ENCODE measurements at regions of chr5 and their contacts with region 1.

Region 1: GRCh38 chr5:149317281-149318048 is 27.8 kb upstream of the GRPEL2 start:
- DNase-seq: peak in 7 of 9 experiments; percentile 14 to 71 (median 38)
- ATAC-seq: peak; percentile 69
- H3K4me3 ChIP-seq: no peak overlapping the region
- H3K4me3 Mint-ChIP-seq: no peak overlapping the region
- H3K27ac ChIP-seq: no peak overlapping the region
- H3K27ac Mint-ChIP-seq: no peak overlapping the region
- H3K4me1 ChIP-seq: no peaks in the 10 kb centered on the region
- H3K4me1 Mint-ChIP-seq: peaks cover 3% of the 10 kb centered on the region
- H3K27me3 ChIP-seq: no peaks in the 10 kb centered on the region
- H3K27me3 Mint-ChIP-seq: no peaks in the 10 kb centered on the region
- CTCF ChIP-seq: peak; percentile 90

Region 2: DNA sequence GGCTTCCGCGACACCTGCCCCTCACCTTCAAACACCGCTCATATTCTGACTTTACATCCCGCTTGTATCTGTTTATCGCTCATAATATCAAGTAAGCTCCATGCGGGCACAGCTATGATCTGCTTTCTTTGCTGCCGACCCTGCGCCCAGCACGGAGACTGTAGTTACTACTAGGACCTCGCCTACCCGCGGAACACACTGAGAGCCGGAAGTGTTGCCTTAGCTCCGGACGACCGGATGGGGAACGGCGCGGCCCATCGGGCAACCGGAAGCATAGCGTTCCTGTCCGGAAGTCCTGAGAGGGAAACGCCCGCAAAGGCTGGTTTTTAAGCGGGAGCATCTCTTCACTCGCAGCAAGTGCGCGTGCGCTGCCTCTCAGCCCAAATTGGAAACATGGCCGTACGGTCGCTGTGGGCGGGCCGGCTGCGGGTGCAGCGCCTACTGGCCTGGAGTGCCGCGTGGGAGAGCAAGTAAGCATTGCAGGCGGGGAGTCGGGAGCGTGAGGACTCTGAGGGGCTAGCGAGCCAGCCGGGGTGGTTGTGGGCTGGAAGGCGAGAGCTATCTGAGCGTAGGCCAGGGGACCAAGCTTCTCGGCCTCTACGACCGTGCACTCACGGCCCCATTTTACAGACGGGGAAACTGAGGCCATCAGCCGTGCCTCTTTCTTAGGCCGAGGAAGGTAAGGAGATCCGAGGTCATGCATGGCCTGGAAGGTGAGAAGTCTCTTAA is 27.8 kb after region 1 on chr5 and contains the start of gene GRPEL2:
- CTCF ChIA-PET with region 1: interaction called, 15 read pairs
- POLR2A ChIA-PET with region 1: interaction called, 3 read pairs
- intact Hi-C with region 1: no loop called
- DNase-seq: peak; percentile 65 to 93 (median 84)
- ATAC-seq: peak; percentile 65
- H3K4me3 ChIP-seq: peak within 1 kb of the TSS; percentile 94 to 95
- H3K4me3 Mint-ChIP-seq: peak within 1 kb of the TSS; percentile 92
- H3K27ac ChIP-seq: peak within 1 kb of the TSS; percentile 63 to 88
- H3K27ac Mint-ChIP-seq: peak within 1 kb of the TSS; percentile 90
- H3K4me1 ChIP-seq: peaks cover 53% of the 10 kb centered on the region
- H3K4me1 Mint-ChIP-seq: peaks cover 60% of the 10 kb centered on the region
- H3K27me3 ChIP-seq: no peaks in the 10 kb centered on the region
- H3K27me3 Mint-ChIP-seq: no peaks in the 10 kb centered on the region
- CTCF ChIP-seq: no peak
- total RNA-seq, gene GRPEL2: 9.1 to 9.7 TPM

Region 3: GRCh38 chr5:149357370-149358293 is 40.2 kb after region 1 on chr5 and contains the start of gene PCYOX1L:
- CTCF ChIA-PET with region 1: interaction called, 541 read pairs
- POLR2A ChIA-PET with region 1: interaction called, 5 read pairs
- intact Hi-C with region 1: no loop called
- DNase-seq: peak; percentile 89 to 99 (median 95)
- ATAC-seq: peak; percentile 96
- H3K4me3 ChIP-seq: peak within 1 kb of the TSS; percentile 83 to 88
- H3K4me3 Mint-ChIP-seq: peak within 1 kb of the TSS; percentile 93
- H3K27ac ChIP-seq: peak within 1 kb of the TSS; percentile 63 to 74
- H3K27ac Mint-ChIP-seq: peak within 1 kb of the TSS; percentile 92
- H3K4me1 ChIP-seq: peaks cover 37% of the 10 kb centered on the region
- H3K4me1 Mint-ChIP-seq: peaks cover 67% of the 10 kb centered on the region
- H3K27me3 ChIP-seq: no peaks in the 10 kb centered on the region
- H3K27me3 Mint-ChIP-seq: no peaks in the 10 kb centered on the region
- CTCF ChIP-seq: no peak
- total RNA-seq, gene PCYOX1L: 18.9 to 21.9 TPM

Region 4: GRCh38 chr5:149381987-149382340 is 64.5 kb after region 1 on chr5:
- CTCF ChIA-PET with region 1: interaction called, 541 read pairs
- POLR2A ChIA-PET with region 1: no interaction called
- intact Hi-C with region 1: no loop called
- DNase-seq: peak; percentile 45 to 82 (median 71)
- ATAC-seq: peak; percentile 61
- H3K4me3 ChIP-seq: no peak overlapping the region
- H3K4me3 Mint-ChIP-seq: no peak overlapping the region
- H3K27ac ChIP-seq: no peak overlapping the region
- H3K27ac Mint-ChIP-seq: no peak overlapping the region
- H3K4me1 ChIP-seq: peaks cover 3% of the 10 kb centered on the region
- H3K4me1 Mint-ChIP-seq: peaks cover 4% of the 10 kb centered on the region
- H3K27me3 ChIP-seq: peaks cover 0 to 2% of the 10 kb centered on the region in 2 experiments
- H3K27me3 Mint-ChIP-seq: peaks cover 2% of the 10 kb centered on the region
- CTCF ChIP-seq: peak; percentile 77